A673 (cell line): ENCODE measurements at regions of chr12 and their contacts with region 1.

Region 1: DNA sequence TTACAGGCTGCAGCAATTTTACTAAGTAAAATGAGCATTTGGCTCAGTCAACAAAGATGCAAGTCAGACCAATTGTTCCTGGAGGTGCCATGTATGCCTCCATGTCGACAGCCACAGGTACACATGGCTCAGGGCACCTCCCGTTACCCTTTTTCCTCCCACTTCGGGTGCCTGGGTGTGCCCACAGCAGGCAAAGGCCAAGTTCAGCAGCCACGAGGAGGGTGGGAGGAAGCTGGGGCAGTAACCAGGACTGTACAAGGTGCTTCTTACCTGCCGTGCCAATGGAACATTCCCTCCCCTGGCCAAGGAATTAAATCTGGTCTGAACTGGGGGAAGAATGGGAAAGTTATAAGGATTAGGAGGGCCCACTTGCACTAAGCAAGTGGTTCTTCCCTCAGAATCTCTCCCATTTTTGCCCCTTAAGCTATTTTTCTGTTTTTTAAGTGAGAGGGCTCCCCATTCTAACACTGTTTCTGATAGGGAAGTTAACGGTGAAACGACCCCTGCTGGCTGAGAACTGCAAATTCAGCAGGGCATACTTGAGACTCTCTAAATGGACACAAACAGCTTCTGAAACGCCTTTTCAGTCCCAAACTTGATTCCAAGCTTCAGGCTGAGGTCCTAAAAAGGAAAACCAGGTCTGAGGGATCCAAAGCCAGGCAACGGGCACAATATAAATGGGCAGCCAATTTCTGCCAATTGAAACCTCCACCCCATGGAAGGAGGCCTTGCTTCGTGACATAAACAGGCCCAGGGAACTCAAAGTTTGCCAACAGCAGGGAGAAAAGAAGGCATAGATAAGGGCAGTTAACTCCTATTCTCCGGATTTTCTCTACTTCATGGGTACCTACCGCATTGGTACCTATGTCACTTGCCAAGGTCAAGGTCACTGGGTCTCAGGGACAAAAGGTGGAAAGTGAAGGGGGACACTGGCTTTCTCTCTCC is 24.8 kb downstream of the CLECL1 start:
- DNase-seq: peak; percentile 66
- H3K4me3 ChIP-seq: no peak overlapping the region
- H3K27ac ChIP-seq: no peak overlapping the region
- H3K4me1 ChIP-seq: no peaks in the 10 kb centered on the region
- H3K27me3 ChIP-seq: no peaks in the 10 kb centered on the region
- CTCF ChIP-seq: peak; percentile 88

Region 2: DNA sequence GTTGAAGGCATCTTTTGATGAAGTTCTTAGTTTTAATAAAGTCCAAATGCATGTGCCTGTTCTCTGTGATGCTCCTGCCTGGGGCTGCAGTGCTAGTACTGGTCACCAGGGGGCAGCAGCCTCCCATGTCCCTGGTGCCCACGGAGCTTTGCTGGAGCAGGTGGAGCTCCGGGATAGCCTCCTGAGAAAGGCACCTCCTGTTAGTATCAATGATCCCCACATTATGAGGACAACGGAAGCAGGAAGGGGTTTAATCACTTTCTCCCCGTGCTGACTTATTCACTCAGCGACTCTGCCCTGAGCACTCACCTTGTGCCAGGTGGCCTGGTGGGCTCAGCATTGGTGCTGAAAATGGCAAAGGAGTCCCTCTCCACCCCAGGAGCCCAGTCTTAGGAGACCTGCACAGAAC is 376.9 kb before region 1 on chr12:
- CTCF ChIA-PET with region 1: interaction called, 8 read pairs
- POLR2A ChIA-PET with region 1: no interaction called
- intact Hi-C with region 1: loop called (anchors 1 kb)
- DNase-seq: peak; percentile 68
- H3K4me3 ChIP-seq: no peak overlapping the region
- H3K27ac ChIP-seq: no peak overlapping the region
- H3K4me1 ChIP-seq: no peaks in the 10 kb centered on the region
- H3K27me3 ChIP-seq: no peaks in the 10 kb centered on the region
- CTCF ChIP-seq: peak; percentile 99

Region 3: DNA sequence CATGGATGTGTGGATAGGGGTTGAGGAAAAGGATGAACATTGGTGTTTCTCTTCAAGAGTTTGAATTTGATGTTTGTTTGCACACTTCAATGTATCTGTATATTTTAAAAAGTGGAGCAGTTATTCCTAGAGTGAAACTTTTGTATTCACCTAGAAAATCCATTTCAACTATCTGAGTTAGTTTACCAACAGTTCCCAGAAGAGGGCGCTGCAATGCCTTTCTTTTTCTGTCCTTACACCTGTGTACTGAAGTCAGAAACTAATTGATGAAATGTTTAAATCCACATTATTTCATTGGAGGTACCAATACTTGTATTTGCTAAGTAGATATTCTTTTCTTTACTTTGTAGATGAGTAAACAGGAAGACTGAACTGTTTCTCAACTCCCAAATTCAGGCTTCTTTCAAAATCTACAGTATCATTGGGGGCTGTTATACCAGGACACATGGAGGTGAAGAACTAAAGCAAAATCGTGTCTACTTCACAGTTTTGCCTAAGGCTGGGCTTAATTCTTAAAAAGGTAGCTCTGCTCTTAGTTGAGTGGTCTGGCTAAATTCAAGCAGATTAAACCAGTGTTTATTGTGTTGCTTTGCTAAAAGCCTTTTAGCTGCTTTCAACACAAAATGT is 73.8 kb before region 1 on chr12:
- CTCF ChIA-PET with region 1: no interaction called
- POLR2A ChIA-PET with region 1: no interaction called
- intact Hi-C with region 1: loop called (anchors 1 kb)
- DNase-seq: peak; percentile 52
- H3K4me3 ChIP-seq: no peak overlapping the region
- H3K27ac ChIP-seq: no peak overlapping the region
- H3K4me1 ChIP-seq: no peaks in the 10 kb centered on the region
- H3K27me3 ChIP-seq: peaks cover 10% of the 10 kb centered on the region
- CTCF ChIP-seq: peak; percentile 76